ENCODE measurements at regions of chr10 and their contacts with region 1.

Region 1: DNA sequence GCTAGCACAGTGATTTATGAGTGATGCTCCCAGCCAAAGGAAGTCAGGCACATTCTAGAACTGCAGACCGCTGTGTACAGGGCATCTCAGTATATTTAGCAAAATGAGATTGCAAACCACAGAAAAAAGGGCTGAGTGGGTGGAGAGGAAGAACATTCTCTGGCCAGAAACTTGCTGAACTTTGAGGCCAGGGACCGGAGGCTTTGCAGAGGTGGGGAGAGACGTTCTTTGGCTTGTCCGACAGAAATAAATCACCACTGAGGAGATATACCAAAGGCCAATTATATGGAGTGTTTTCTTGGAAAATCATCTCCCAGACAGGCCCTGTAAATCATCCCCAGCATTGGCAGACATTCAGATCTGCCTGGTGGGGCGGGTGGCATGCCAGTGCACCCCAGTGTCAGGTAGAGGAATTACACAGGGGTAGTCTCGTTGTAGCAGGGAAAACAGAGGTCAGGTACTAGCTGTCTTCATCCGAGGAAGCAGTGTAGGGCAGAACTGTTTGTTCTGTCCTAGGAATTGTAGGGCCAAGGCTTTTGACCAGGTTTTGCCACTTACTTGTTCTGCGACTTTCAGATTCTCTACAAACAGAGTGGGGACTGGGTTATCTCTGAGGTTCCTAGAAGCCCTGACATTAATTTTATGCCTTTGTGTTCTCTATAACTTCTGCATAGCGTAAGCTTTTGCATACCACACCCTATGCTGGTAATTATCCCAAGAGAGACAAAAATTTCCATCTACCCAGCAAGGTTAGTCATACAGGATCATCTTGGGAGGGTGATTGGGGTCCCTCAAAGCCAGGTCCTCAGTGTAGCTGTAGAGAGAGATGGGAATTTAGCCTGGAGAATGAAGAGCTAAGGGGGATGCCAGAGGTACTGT is 655.6 kb downstream of the LRMDA start:
- DNase-seq: peak; percentile 77
- H3K4me3 ChIP-seq: no peak overlapping the region
- H3K27ac ChIP-seq: peak overlapping the region; percentile 13 to 19
- H3K4me1 ChIP-seq: no peaks in the 10 kb centered on the region
- H3K27me3 ChIP-seq: no peaks in the 10 kb centered on the region
- CTCF ChIP-seq: peak; percentile 58 to 80 (median 68)
- POLR2A ChIP-seq: no peak

Region 2: DNA sequence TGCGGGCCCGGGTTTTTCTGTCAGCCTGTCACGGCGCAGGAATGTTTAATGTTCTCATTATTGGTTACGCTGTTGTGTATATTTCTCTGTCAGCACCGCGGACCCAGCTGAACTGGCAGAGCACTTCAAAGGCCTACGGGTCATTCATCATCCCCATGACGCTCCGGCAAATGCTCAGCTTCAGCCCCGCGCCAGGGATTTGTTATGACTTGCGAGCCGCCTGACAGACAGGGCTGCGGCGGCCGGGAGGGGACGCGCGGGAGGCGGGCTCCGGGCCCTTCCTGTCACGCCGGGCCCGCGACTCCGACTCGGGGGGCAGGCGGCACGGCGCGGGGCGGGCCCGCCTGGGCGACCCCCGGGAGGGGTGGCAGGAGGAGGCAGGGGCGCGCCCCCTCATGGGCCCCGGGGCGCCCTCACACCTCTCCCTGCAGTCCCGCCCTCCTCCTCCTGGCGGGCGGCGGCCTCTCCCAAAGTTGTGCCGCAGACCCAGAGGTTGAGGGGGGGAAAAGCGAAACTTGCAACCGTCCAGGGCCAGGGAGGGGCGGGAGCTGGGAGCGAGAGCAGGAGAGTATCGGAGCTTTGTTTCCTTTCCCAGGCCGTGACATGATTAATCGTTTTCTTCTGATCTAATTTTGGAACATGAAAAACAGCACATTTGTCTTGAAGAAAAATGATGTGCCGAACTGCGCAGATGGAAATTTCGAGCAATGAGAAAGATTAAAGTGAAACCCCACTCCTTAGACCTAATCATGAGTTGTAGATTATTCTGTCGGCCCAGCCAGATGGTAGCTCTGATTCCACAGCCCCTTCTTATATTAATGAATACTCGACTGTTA is 791.9 kb before region 1 on chr10:
- intact Hi-C with region 1: loop called (anchors 10 kb)
- DNase-seq: peak; percentile 94
- H3K4me3 ChIP-seq: peak overlapping the region; percentile 53 to 69
- H3K27ac ChIP-seq: peak overlapping the region; percentile 92 to 97
- H3K4me1 ChIP-seq: peaks cover 3% of the 10 kb centered on the region
- H3K27me3 ChIP-seq: no peaks in the 10 kb centered on the region
- CTCF ChIP-seq: peak in 3 of 4 experiments; percentile 24 to 50 (median 41)
- POLR2A ChIP-seq: peak; percentile 50

Region 3: GRCh38 chr10:75662715-75663114 is 424.3 kb before region 1 on chr10:
- intact Hi-C with region 1: loop called (anchors 5 kb)
- DNase-seq: peak; percentile 63
- H3K4me3 ChIP-seq: no peak overlapping the region
- H3K27ac ChIP-seq: peak overlapping the region; percentile 60 to 68
- H3K4me1 ChIP-seq: peaks cover 5% of the 10 kb centered on the region
- H3K27me3 ChIP-seq: no peaks in the 10 kb centered on the region
- CTCF ChIP-seq: no peak
- POLR2A ChIP-seq: no peak

Region 4: DNA sequence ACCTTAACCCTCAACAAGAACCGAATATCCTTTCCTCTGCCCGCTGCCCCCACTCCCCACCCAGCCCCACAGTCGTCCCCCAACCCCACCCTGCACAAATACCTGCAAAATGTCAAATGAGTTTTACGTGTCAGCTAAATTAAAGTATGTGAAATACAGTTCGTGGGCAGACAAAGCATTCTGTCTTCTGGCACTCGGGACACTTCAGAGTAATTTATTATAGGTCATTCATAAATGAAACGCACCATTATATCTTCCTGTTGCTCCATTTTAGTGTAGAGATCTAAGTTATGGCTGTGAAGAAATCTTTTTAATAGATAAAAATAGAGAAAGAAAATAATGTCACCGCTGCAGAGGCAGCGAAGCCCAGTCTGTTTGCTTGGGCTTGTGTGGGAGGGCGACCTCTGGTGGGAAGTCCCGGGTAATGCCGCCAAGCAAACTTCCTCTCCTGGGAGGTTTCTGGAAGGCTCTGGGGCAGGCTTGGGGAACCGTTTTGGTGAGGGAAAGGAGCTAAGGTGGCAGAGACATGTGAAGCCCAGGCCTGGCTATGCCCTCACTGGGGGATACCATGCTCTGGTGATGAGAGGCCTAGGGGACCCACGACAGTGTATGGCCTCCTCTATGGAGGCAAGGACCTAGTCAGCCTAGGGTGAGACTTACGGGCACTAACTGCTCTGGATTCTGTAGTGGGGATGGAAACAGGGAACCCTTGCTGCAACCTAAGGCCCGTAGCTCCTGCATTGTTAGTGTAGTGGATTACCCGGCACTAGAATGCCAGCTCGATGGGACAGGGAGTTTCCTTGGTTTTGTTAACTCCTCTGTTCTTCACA is 50.7 kb before region 1 on chr10:
- intact Hi-C with region 1: loop called (anchors 5 kb)
- DNase-seq: peak; percentile 79
- H3K4me3 ChIP-seq: no peak overlapping the region
- H3K27ac ChIP-seq: peak overlapping the region; percentile 13 to 48
- H3K4me1 ChIP-seq: peaks cover 4% of the 10 kb centered on the region
- H3K27me3 ChIP-seq: no peaks in the 10 kb centered on the region
- CTCF ChIP-seq: peak; percentile 79 to 95 (median 91)
- POLR2A ChIP-seq: no peak

Region 5: GRCh38 chr10:76303682-76304316 is 216.8 kb after region 1 on chr10:
- intact Hi-C with region 1: loop called (anchors 10 kb)
- DNase-seq: peak; percentile 83
- H3K4me3 ChIP-seq: no peak overlapping the region
- H3K27ac ChIP-seq: peak overlapping the region in 1 of 2 donors; percentile 16
- H3K4me1 ChIP-seq: no peaks in the 10 kb centered on the region
- H3K27me3 ChIP-seq: no peaks in the 10 kb centered on the region
- CTCF ChIP-seq: peak in 3 of 4 experiments; percentile 39 to 73 (median 69)
- POLR2A ChIP-seq: no peak

Region 6: GRCh38 chr10:76547352-76547972 is 460.5 kb after region 1 on chr10:
- intact Hi-C with region 1: loop called (anchors 5 kb)
- DNase-seq: peak; percentile 82
- H3K4me3 ChIP-seq: no peak overlapping the region
- H3K27ac ChIP-seq: no peak overlapping the region
- H3K4me1 ChIP-seq: no peaks in the 10 kb centered on the region
- H3K27me3 ChIP-seq: no peaks in the 10 kb centered on the region
- CTCF ChIP-seq: peak; percentile 74 to 86 (median 82)
- POLR2A ChIP-seq: no peak

Measured in prostate gland (tissue), 2 donors.